ENCODE measurements at regions of chr4 and their contacts with region 1.

Region 1: GRCh38 chr4:173301518-173302201 is 32.5 kb downstream of the HMGB2 start:
- DNase-seq: no peak
- ATAC-seq: no peak

Region 2: GRCh38 chr4:173013232-173013930 is 288.3 kb before region 1 on chr4:
- intact Hi-C with region 1: loop called in 1 of 2 experiments (anchors 5 kb)
- DNase-seq: no peak
- ATAC-seq: peak; percentile 47 to 76

Region 3: DNA sequence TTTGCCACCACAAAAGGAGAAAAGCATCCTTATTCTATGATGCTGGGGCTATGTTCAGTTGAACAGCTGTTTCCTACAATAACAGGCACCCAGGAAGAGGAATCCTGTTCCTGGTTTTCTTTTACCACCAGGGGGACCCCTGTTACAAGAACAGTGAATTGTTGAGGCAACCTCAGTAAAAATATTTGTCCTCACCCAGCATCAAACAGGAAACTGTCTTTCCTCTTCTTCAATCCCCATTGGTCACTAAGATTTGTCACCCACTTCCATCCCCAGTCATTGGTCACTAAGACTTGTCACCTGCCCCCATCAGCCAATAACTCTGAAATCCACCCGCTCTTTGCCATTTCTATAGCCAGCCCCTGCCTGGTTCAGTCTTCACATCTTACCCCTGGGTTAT is 276.5 kb before region 1 on chr4:
- intact Hi-C with region 1: loop called in 1 of 2 experiments (anchors 5 kb)
- DNase-seq: no peak
- ATAC-seq: peak in 1 of 2 donors; percentile 78

Measured in left cardiac atrium (tissue), 4 donors.